OCI-LY7 (cell line): ENCODE measurements at regions of chr5 and their contacts with region 1.

Region 1: GRCh38 chr5:118791926-118792734 is 196.2 kb downstream of the DTWD2 start:
- DNase-seq: peak; percentile 72
- H3K4me3 ChIP-seq: no peak overlapping the region
- H3K27ac ChIP-seq: no peak overlapping the region
- H3K4me1 ChIP-seq: no peaks in the 10 kb centered on the region
- CTCF ChIP-seq: peak; percentile 92

Region 2: GRCh38 chr5:117454716-117455596 is 1337.2 kb before region 1 on chr5:
- CTCF ChIA-PET with region 1: no interaction called
- POLR2A ChIA-PET with region 1: no interaction called
- intact Hi-C with region 1: loop called (anchors 1 kb)
- DNase-seq: peak; percentile 57
- H3K4me3 ChIP-seq: peak overlapping the region; percentile 53
- H3K27ac ChIP-seq: no peak overlapping the region
- H3K4me1 ChIP-seq: no peaks in the 10 kb centered on the region
- CTCF ChIP-seq: peak; percentile 92

Region 3: DNA sequence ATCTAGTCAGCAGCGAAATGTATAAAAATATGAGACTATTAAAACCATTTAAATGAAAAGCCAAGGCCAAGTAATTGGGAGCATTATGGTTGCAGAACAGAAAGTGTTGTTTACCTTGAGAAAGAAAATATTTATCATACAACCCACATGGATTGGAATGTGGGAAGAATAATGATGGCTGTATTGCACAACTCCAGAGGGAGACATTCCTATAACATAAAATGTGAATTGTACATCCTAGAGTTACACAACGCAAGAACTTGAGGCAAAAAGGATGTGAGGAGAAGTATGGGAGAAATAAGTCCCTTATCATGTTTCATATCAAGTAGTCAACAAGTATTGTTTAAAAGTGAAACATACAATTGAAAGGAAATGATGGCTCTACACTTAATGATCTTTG is 1203.5 kb before region 1 on chr5:
- CTCF ChIA-PET with region 1: no interaction called
- POLR2A ChIA-PET with region 1: no interaction called
- intact Hi-C with region 1: loop called (anchors 10 kb)
- DNase-seq: no peak
- H3K4me3 ChIP-seq: no peak overlapping the region
- H3K27ac ChIP-seq: no peak overlapping the region
- H3K4me1 ChIP-seq: no peaks in the 10 kb centered on the region
- CTCF ChIP-seq: no peak

Region 4: GRCh38 chr5:118844351-118844750 is 52.2 kb after region 1 on chr5:
- CTCF ChIA-PET with region 1: no interaction called
- POLR2A ChIA-PET with region 1: no interaction called
- intact Hi-C with region 1: no loop called
- DNase-seq: no peak
- H3K4me3 ChIP-seq: no peak overlapping the region
- H3K27ac ChIP-seq: no peak overlapping the region
- H3K4me1 ChIP-seq: no peaks in the 10 kb centered on the region
- CTCF ChIP-seq: no peak